ENCODE measurements at regions of chr5 and their contacts with region 1.

Region 1: GRCh38 chr5:113330533-113331208 is 104.1 kb downstream of the TSSK1B start:
- DNase-seq: peak in 4 of 14 experiments; percentile 14 to 78 (median 77)
- ATAC-seq: peak; percentile 90
- H3K4me3 ChIP-seq: no peak overlapping the region
- H3K4me3 Mint-ChIP-seq: no peak overlapping the region
- H3K27ac ChIP-seq: no peak overlapping the region
- H3K27ac Mint-ChIP-seq: peak overlapping the region; percentile 60
- H3K4me1 ChIP-seq: no peaks in the 10 kb centered on the region
- H3K4me1 Mint-ChIP-seq: peaks cover 21% of the 10 kb centered on the region
- H3K27me3 ChIP-seq: no peaks in the 10 kb centered on the region
- H3K27me3 Mint-ChIP-seq: no peaks in the 10 kb centered on the region
- CTCF ChIP-seq: peak; percentile 76

Region 2: DNA sequence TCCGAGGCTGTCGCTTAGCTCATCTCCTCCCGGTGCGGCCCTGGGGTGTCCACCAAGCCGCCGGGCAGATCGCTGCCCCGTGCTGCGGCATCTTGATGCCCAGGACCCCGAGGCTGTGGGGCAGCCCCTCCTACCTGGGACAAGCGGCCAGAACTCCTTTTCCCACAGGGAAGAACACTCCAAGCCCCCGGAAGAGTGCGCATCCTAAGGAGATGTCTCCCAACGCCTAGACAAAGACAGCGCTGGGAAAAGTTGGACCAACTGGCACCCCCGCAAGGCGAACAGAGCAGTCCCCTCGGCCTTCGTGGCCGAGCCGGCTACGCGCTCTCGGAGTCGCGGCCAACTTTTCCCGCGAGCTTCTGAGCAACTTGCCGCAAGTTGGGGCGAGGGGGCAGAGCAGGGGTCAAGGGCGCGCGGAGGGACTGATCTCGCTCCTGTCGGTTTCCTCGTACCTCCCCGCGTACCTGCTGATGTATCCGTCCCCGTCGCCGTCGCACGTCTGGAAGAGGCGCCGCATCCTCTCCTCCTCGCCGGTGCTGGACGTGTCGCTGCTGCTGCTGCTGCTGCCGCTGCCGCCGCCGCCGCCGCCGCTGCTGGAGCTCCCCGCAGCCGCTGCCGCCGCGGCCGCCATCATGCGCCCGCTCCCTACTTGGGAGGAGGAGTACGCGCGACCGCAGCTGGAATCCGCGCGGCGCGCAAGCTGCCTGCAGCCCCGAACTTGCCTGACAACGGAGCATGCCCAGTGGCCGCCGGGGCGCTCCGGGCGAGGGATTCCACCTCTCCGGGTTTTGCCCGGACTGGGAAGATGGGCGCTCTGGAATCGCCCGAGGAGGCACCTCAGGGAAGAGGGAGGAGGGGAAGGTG is 157.3 kb after region 1 on chr5 and contains the start of gene MCC:
- CTCF ChIA-PET with region 1: no interaction called
- POLR2A ChIA-PET with region 1: no interaction called
- intact Hi-C with region 1: loop called in 1 of 2 experiments (anchors 10 kb)
- DNase-seq: peak in 8 of 14 experiments; percentile 11 to 66 (median 34)
- ATAC-seq: peak; percentile 71
- H3K4me3 ChIP-seq: peak within 1 kb of the TSS; percentile 61
- H3K4me3 Mint-ChIP-seq: peak within 1 kb of the TSS; percentile 81
- H3K27ac ChIP-seq: no peak within 1 kb of the TSS
- H3K27ac Mint-ChIP-seq: no peak within 1 kb of the TSS
- H3K4me1 ChIP-seq: peaks cover 24% of the 10 kb centered on the region
- H3K4me1 Mint-ChIP-seq: peaks cover 18% of the 10 kb centered on the region
- H3K27me3 ChIP-seq: peaks cover 53 to 58% of the 10 kb centered on the region in 2 experiments
- H3K27me3 Mint-ChIP-seq: peaks cover 83% of the 10 kb centered on the region
- CTCF ChIP-seq: no peak
- total RNA-seq, gene MCC: 3.2 to 3.3 TPM

Region 3: DNA sequence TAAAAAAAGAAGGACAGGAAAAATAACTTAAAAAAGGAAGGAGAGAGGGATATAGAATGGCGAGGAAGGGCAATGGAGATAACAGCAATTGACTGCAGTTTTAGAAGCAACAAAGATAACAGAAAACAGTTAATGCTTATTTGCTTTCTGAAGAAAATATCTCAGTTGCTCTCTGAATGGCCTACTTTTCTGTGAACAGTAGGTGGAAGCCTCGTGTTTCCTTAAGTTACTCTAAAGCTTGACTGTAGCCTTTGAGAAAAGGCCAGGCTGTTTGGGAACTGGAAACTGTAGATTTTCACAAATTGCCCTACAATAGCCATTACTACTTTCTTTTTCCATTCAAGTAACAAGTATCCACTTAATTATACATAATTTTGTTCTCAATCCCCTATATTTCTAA is 587.3 kb after region 1 on chr5:
- CTCF ChIA-PET with region 1: no interaction called
- POLR2A ChIA-PET with region 1: no interaction called
- intact Hi-C with region 1: no loop called
- DNase-seq: no peak
- ATAC-seq: no peak
- H3K4me3 ChIP-seq: no peak overlapping the region
- H3K4me3 Mint-ChIP-seq: no peak overlapping the region
- H3K27ac ChIP-seq: no peak overlapping the region
- H3K27ac Mint-ChIP-seq: no peak overlapping the region
- H3K4me1 ChIP-seq: no peaks in the 10 kb centered on the region
- H3K4me1 Mint-ChIP-seq: no peaks in the 10 kb centered on the region
- H3K27me3 ChIP-seq: no peaks in the 10 kb centered on the region
- H3K27me3 Mint-ChIP-seq: no peaks in the 10 kb centered on the region
- CTCF ChIP-seq: no peak